Activated CD4-positive, alpha-beta T cell treated with anti-CD3 and anti-CD28 coated beads for 36 hours (primary cell): ENCODE measurements at regions of chr3 and their contacts with region 1.

Region 1: GRCh38 chr3:11803977-11804892 is 42.5 kb downstream of the TAMM41 start:
- DNase-seq: peak; percentile 56
- ATAC-seq: peak; percentile 80
- H3K4me3 Mint-ChIP-seq: no peak overlapping the region
- H3K27ac Mint-ChIP-seq: no peak overlapping the region
- H3K4me1 Mint-ChIP-seq: peaks cover 5% of the 10 kb centered on the region
- H3K27me3 Mint-ChIP-seq: no peaks in the 10 kb centered on the region

Region 2: DNA sequence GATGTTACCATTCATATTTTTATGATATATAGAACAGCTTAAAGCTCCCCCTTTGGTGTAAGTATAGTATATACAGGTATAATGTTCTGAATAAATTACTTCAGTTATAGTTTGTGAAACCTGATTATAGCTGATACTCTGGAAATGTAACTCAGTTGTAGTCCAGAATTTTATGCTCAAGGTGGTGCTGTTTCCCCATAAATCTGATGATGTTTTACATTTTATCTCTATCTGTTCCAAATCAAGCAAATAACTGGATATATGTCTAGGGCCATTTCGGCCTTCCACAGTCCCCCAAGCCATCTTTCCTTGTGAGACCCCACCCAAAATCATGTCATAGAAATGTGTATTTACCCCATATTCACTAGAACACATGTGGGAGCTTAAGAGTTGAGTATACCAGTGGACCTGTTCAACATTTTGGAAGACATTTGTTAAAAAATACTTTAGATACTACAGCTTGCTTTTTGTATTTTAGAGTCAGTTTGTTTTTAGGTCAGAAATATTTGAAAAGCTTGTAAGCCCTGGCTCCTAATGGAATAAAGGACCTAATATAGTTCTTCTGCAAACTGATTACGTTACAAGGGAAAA is 424.9 kb before region 1 on chr3:
- CTCF ChIA-PET with region 1: interaction called, 5 read pairs
- POLR2A ChIA-PET with region 1: no interaction called
- intact Hi-C with region 1: loop called (anchors 1 to 10 kb)
- DNase-seq: no peak
- ATAC-seq: no peak
- H3K4me3 Mint-ChIP-seq: no peak overlapping the region
- H3K27ac Mint-ChIP-seq: no peak overlapping the region
- H3K4me1 Mint-ChIP-seq: no peaks in the 10 kb centered on the region
- H3K27me3 Mint-ChIP-seq: no peaks in the 10 kb centered on the region

Region 3: DNA sequence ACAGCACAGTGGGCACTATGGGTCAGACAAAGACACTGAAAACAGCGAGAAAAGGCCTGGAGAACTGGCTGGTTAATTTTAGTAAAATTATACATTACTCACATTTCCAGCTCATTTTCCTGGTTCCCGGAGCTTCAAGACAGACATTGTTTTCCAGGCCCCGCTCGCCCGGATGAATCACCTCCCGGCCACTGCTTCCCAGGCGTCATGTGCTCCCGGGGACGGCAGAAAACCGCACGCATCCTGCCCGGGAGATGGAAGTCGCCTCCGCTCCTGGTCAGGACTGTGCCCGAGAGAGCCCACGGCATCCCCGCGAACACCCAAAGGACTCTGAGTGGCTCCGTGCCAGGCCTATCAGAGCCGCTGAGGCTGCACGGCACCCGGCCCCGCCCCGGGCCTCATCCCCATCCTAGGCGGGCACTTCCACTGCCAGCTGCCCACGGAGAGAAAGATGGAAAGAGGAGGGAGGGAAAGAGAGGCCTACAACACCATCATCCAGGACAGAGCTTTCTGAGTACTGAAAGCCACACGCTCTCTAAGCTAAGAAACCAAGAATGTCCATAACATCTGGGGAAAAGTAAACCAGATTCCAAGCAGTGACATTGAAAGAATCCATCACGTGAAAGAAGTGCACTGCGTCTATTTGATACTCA is 235.6 kb before region 1 on chr3:
- CTCF ChIA-PET with region 1: no interaction called
- POLR2A ChIA-PET with region 1: no interaction called
- intact Hi-C with region 1: no loop called
- DNase-seq: no peak
- ATAC-seq: no peak
- H3K4me3 Mint-ChIP-seq: no peak overlapping the region
- H3K27ac Mint-ChIP-seq: no peak overlapping the region
- H3K4me1 Mint-ChIP-seq: peaks cover 6% of the 10 kb centered on the region
- H3K27me3 Mint-ChIP-seq: no peaks in the 10 kb centered on the region

Region 4: GRCh38 chr3:11671648-11672100 is 132.6 kb before region 1 on chr3:
- CTCF ChIA-PET with region 1: no interaction called
- POLR2A ChIA-PET with region 1: no interaction called
- intact Hi-C with region 1: no loop called
- DNase-seq: no peak
- ATAC-seq: no peak
- H3K4me3 Mint-ChIP-seq: no peak overlapping the region
- H3K27ac Mint-ChIP-seq: no peak overlapping the region
- H3K4me1 Mint-ChIP-seq: peaks cover 3% of the 10 kb centered on the region
- H3K27me3 Mint-ChIP-seq: no peaks in the 10 kb centered on the region

Region 5: GRCh38 chr3:11815111-11815510 is 10.9 kb after region 1 on chr3:
- CTCF ChIA-PET with region 1: interaction called, 16 read pairs
- POLR2A ChIA-PET with region 1: no interaction called
- intact Hi-C with region 1: no loop called
- DNase-seq: no peak
- ATAC-seq: no peak
- H3K4me3 Mint-ChIP-seq: no peak overlapping the region
- H3K27ac Mint-ChIP-seq: no peak overlapping the region
- H3K4me1 Mint-ChIP-seq: peaks cover 2% of the 10 kb centered on the region
- H3K27me3 Mint-ChIP-seq: no peaks in the 10 kb centered on the region